ENCODE measurements at regions of chr16 and their contacts with region 1.

Region 1: GRCh38 chr16:30510376-30510938 is 15.9 kb downstream of the ZNF768 start:
- DNase-seq: no peak
- H3K4me3 Mint-ChIP-seq: no peak overlapping the region
- H3K27ac Mint-ChIP-seq: peak overlapping the region; percentile 7
- H3K4me1 Mint-ChIP-seq: peaks cover 10% of the 10 kb centered on the region
- H3K27me3 Mint-ChIP-seq: no peaks in the 10 kb centered on the region

Region 2: GRCh38 chr16:30488744-30489605 is 21.5 kb before region 1 on chr16:
- CTCF ChIA-PET with region 1: interaction called, 11 read pairs
- POLR2A ChIA-PET with region 1: no interaction called
- DNase-seq: no peak
- H3K4me3 Mint-ChIP-seq: no peak overlapping the region
- H3K27ac Mint-ChIP-seq: peak overlapping the region; percentile 19
- H3K4me1 Mint-ChIP-seq: peaks cover 51% of the 10 kb centered on the region
- H3K27me3 Mint-ChIP-seq: no peaks in the 10 kb centered on the region

Region 3: GRCh38 chr16:30494709-30495108 is 15.7 kb before region 1 on chr16:
- CTCF ChIA-PET with region 1: interaction called, 17 read pairs
- POLR2A ChIA-PET with region 1: interaction called, 4 read pairs
- DNase-seq: no peak
- H3K4me3 Mint-ChIP-seq: no peak overlapping the region
- H3K27ac Mint-ChIP-seq: no peak overlapping the region
- H3K4me1 Mint-ChIP-seq: peaks cover 37% of the 10 kb centered on the region
- H3K27me3 Mint-ChIP-seq: no peaks in the 10 kb centered on the region

Region 4: GRCh38 chr16:30628627-30629540 is 118.4 kb after region 1 on chr16:
- CTCF ChIA-PET with region 1: no interaction called
- POLR2A ChIA-PET with region 1: no interaction called
- DNase-seq: peak; percentile 91
- H3K4me3 Mint-ChIP-seq: no peak overlapping the region
- H3K27ac Mint-ChIP-seq: no peak overlapping the region
- H3K4me1 Mint-ChIP-seq: peaks cover 11% of the 10 kb centered on the region
- H3K27me3 Mint-ChIP-seq: no peaks in the 10 kb centered on the region